Activated CD8-positive, alpha-beta T cell treated with anti-CD3 and anti-CD28 coated beads for 36 hours (primary cell): ENCODE measurements at regions of chr3 and their contacts with region 1.

Region 1: DNA sequence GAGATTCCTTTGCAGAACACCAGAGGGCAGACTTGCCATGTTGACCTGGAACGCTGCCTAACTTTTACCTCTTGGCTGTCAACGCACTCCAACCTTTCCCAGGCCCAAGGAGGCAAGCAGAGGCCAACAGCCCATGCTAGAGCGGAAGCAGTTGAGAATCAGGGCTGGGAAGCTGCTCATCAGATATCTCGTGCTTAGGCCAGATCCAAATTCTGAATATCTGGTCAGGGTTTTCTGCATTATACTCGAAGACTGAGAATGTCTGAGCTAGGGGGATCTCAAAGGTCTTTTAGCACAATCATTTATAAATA is 2.5 kb downstream of the XIRP1 start:
- DNase-seq: peak; percentile 65
- ATAC-seq: peak; percentile 60
- H3K4me3 Mint-ChIP-seq: no peak overlapping the region
- H3K27ac Mint-ChIP-seq: no peak overlapping the region
- H3K4me1 Mint-ChIP-seq: peaks cover 26% of the 10 kb centered on the region
- H3K27me3 Mint-ChIP-seq: no peaks in the 10 kb centered on the region
- CTCF ChIP-seq: peak; percentile 80

Region 2: DNA sequence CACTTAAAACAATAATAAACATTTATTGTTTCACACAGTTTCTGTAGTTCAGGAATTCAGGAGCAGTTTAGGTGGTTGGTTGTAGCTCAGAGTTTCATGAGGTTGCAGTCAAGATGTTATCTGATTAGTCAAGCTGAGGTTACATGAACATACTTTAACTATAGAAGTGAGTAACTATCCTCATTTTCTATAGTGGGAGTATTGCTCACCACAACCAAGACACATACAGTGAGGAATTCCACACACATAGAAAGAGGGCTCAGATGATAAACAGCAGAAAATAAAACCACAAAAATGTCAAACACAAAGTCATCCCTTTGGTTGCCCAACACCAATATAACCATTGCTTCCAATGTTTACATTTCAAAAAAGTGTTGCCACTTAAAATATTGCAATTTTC is 151.7 kb before region 1 on chr3:
- CTCF ChIA-PET with region 1: no interaction called
- POLR2A ChIA-PET with region 1: no interaction called
- intact Hi-C with region 1: no loop called
- DNase-seq: no peak
- ATAC-seq: no peak
- H3K4me3 Mint-ChIP-seq: no peak overlapping the region
- H3K27ac Mint-ChIP-seq: no peak overlapping the region
- H3K4me1 Mint-ChIP-seq: peaks cover 5% of the 10 kb centered on the region
- H3K27me3 Mint-ChIP-seq: no peaks in the 10 kb centered on the region
- CTCF ChIP-seq: no peak

Region 3: GRCh38 chr3:39126532-39127071 is 63.3 kb before region 1 on chr3:
- CTCF ChIA-PET with region 1: interaction called, 31 read pairs
- POLR2A ChIA-PET with region 1: no interaction called
- intact Hi-C with region 1: no loop called
- DNase-seq: peak; percentile 64
- ATAC-seq: peak; percentile 83
- H3K4me3 Mint-ChIP-seq: no peak overlapping the region
- H3K27ac Mint-ChIP-seq: no peak overlapping the region
- H3K4me1 Mint-ChIP-seq: peaks cover 18% of the 10 kb centered on the region
- H3K27me3 Mint-ChIP-seq: no peaks in the 10 kb centered on the region
- CTCF ChIP-seq: peak; percentile 46

Region 4: GRCh38 chr3:39202094-39202493 is 12.2 kb after region 1 on chr3:
- CTCF ChIA-PET with region 1: interaction called, 21 read pairs
- POLR2A ChIA-PET with region 1: interaction called, 3 read pairs
- intact Hi-C with region 1: no loop called
- DNase-seq: no peak
- ATAC-seq: no peak
- H3K4me3 Mint-ChIP-seq: no peak overlapping the region
- H3K27ac Mint-ChIP-seq: no peak overlapping the region
- H3K4me1 Mint-ChIP-seq: no peaks in the 10 kb centered on the region
- H3K27me3 Mint-ChIP-seq: peaks cover 11% of the 10 kb centered on the region
- CTCF ChIP-seq: no peak

Region 5: DNA sequence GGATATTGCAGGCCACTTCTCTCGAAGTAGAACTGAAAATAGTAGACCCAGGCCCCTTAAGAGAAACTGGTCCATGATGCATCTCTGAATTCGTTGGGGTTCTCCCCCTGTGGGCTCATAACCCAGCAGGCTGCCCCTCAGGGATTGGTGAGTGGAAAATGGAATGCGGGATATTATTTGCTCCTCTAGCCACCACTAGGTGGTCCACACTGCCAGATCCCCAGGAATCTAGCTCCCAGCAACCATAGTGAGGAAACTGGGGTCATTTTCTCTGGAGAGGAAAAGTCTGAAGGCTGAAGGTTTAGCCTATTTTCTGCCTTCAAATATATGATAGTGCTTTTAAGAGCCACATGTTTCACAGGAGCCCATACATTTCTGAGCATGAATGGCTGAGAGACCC is 83.2 kb after region 1 on chr3:
- CTCF ChIA-PET with region 1: interaction called, 15 read pairs
- POLR2A ChIA-PET with region 1: interaction called, 7 read pairs
- intact Hi-C with region 1: no loop called
- DNase-seq: no peak
- ATAC-seq: no peak
- H3K4me3 Mint-ChIP-seq: no peak overlapping the region
- H3K27ac Mint-ChIP-seq: no peak overlapping the region
- H3K4me1 Mint-ChIP-seq: peaks cover 16% of the 10 kb centered on the region
- H3K27me3 Mint-ChIP-seq: peaks cover 3% of the 10 kb centered on the region
- CTCF ChIP-seq: no peak

Region 6: GRCh38 chr3:39327746-39328349 is 137.9 kb after region 1 on chr3:
- CTCF ChIA-PET with region 1: no interaction called
- POLR2A ChIA-PET with region 1: no interaction called
- intact Hi-C with region 1: no loop called
- DNase-seq: peak; percentile 24
- ATAC-seq: peak; percentile 67
- H3K4me3 Mint-ChIP-seq: no peak overlapping the region
- H3K27ac Mint-ChIP-seq: peak overlapping the region; percentile 27
- H3K4me1 Mint-ChIP-seq: peaks cover 34% of the 10 kb centered on the region
- H3K27me3 Mint-ChIP-seq: no peaks in the 10 kb centered on the region
- CTCF ChIP-seq: no peak

Region 7: DNA sequence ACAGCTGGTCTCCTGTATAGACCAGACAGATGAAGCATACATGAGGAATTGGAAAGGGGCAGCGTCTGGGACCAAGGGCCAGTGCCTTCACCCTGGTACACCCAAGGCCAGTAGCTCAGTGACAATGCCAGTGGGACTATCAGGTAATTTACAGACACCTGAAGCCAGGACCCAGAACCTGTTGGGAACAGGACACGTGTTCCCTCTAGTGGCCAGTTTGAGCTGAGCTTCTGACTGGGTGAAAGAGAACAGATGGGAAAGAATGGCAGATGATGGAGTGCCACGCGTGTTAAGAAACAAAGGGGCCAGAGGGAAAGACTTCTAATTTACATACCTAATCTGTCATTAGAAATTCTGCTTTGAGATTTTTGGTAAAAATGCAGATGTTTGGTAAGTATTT is 188.2 kb after region 1 on chr3:
- CTCF ChIA-PET with region 1: interaction called, 9 read pairs
- POLR2A ChIA-PET with region 1: no interaction called
- intact Hi-C with region 1: loop called (anchors 10 kb)
- DNase-seq: peak; percentile 74
- ATAC-seq: peak; percentile 87
- H3K4me3 Mint-ChIP-seq: no peak overlapping the region
- H3K27ac Mint-ChIP-seq: no peak overlapping the region
- H3K4me1 Mint-ChIP-seq: peaks cover 5% of the 10 kb centered on the region
- H3K27me3 Mint-ChIP-seq: no peaks in the 10 kb centered on the region
- CTCF ChIP-seq: peak; percentile 75